Ascending aorta (tissue), 2 donors: ENCODE measurements at regions of chr10 and their contacts with region 1.

Region 1: GRCh38 chr10:97025613-97026242 is 160.0 kb downstream of the SLIT1 start:
- DNase-seq: peak in 1 of 2 donors; percentile 75
- H3K4me3 ChIP-seq: no peak overlapping the region
- H3K27ac ChIP-seq: peak overlapping the region; percentile 83 to 92
- H3K4me1 ChIP-seq: peaks cover 7 to 24% of the 10 kb centered on the region in 2 donors
- H3K27me3 ChIP-seq: no peaks in the 10 kb centered on the region
- CTCF ChIP-seq: peak; percentile 46 to 65 (median 54)

Region 2: DNA sequence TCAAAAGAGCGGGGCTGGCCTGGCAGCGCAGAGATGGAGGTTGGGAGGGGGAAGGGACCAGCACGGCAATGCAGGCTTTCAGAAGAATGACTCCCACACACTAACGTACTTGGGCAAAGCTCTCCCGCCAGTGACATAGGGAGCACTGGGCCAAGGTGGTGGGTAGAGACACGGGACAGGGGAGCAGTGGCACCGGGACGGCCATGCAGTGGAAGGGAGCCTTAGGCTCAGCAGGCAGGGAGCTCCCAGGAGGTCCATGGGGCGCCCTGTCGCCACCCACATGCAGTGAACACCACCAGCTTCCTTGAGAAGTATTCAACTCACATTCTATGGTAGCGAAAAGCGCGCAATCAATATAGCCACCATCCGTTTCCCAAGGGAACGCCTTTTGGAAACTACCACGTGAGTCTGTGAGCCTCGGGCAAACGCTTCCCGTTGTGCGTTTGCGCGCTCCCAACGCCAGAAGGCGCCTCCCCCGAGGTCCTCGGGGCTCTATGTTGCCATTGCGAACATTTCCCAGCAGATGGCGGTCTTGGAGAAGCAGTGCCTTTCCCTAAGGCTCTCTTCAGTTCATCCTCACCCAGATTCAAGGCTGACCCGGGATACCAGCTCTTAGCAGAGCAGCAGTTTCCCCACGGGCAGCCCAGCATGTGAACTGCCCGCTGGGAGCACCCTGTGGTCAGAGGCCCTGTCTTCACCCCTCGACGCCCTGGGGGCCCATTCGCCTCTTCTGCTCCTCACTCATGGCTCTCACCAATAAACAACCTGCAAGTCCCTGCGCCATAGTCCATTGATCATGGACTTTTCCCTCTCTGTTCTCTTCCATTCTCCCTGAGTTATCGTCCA is 650.5 kb before region 1 on chr10:
- intact Hi-C with region 1: loop called (anchors 10 kb)
- DNase-seq: peak; percentile 33 to 92
- H3K4me3 ChIP-seq: peak overlapping the region; percentile 45 to 61
- H3K27ac ChIP-seq: no peak overlapping the region
- H3K4me1 ChIP-seq: peaks cover 0 to 4% of the 10 kb centered on the region in 2 donors
- H3K27me3 ChIP-seq: no peaks in the 10 kb centered on the region
- CTCF ChIP-seq: peak; percentile 89 to 99 (median 99)

Region 3: GRCh38 chr10:96586419-96587263 is 439.1 kb before region 1 on chr10 and contains the start of gene TM9SF3:
- intact Hi-C with region 1: loop called (anchors 5 kb)
- DNase-seq: peak; percentile 67 to 96
- H3K4me3 ChIP-seq: peak within 1 kb of the TSS; percentile 96 to 97
- H3K27ac ChIP-seq: peak within 1 kb of the TSS; percentile 97 to 98
- H3K4me1 ChIP-seq: peaks cover 3 to 44% of the 10 kb centered on the region in 2 donors
- H3K27me3 ChIP-seq: no peaks in the 10 kb centered on the region
- CTCF ChIP-seq: peak in 1 of 3 experiments; percentile 18
- total RNA-seq, gene TM9SF3: 30.4 TPM

Region 4: GRCh38 chr10:96995851-96996250 is 29.9 kb before region 1 on chr10:
- intact Hi-C with region 1: loop called (anchors 2 kb)
- DNase-seq: no peak
- H3K4me3 ChIP-seq: no peak overlapping the region
- H3K27ac ChIP-seq: peak overlapping the region; percentile 3 to 51
- H3K4me1 ChIP-seq: peaks cover 0 to 11% of the 10 kb centered on the region in 2 donors
- H3K27me3 ChIP-seq: no peaks in the 10 kb centered on the region
- CTCF ChIP-seq: no peak

Region 5: DNA sequence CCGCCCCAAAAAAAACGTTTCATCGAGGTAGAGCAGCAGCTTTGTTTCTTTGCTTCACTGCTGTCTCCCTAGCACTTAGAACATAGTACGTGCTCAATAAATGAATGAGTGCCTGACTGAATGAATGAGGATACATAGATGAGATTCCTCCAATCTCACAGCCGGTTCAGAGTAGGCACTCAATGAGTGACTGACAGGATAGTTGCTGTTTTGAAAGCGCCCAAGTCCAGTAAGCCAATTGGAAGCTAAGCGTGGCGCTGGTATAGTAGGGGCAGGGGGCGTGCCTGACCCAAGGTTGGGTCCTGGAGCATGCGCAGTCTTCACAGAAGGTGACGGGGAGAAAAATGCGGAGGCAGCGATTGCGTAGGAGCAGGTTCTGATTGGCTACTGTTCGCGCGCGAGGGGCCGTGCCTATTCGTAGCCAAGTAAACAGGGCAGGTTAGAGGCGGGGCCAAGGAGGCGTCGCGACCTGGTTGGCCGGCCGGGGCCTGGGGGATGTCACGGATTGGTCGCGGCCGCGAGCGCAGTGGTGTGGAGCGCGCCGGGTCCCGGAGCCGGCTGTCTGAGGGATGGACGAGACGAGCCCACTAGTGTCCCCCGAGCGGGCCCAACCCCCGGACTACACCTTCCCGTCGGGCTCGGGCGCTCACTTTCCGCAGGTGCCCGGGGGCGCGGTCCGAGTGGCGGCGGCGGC is 614.6 kb after region 1 on chr10 and contains the start of gene PI4K2A:
- intact Hi-C with region 1: loop called (anchors 10 kb)
- DNase-seq: peak; percentile 97 to 99
- H3K4me3 ChIP-seq: peak within 1 kb of the TSS; percentile 87 to 96
- H3K27ac ChIP-seq: peak within 1 kb of the TSS; percentile 80 to 93
- H3K4me1 ChIP-seq: peaks cover 0 to 13% of the 10 kb centered on the region in 2 donors
- H3K27me3 ChIP-seq: no peaks in the 10 kb centered on the region
- CTCF ChIP-seq: no peak
- total RNA-seq, gene PI4K2A: 33.7 TPM